Posterior cingulate gyrus (tissue), 11 donors: ENCODE measurements at regions of chr11 and their contacts with region 1.

Region 1: DNA sequence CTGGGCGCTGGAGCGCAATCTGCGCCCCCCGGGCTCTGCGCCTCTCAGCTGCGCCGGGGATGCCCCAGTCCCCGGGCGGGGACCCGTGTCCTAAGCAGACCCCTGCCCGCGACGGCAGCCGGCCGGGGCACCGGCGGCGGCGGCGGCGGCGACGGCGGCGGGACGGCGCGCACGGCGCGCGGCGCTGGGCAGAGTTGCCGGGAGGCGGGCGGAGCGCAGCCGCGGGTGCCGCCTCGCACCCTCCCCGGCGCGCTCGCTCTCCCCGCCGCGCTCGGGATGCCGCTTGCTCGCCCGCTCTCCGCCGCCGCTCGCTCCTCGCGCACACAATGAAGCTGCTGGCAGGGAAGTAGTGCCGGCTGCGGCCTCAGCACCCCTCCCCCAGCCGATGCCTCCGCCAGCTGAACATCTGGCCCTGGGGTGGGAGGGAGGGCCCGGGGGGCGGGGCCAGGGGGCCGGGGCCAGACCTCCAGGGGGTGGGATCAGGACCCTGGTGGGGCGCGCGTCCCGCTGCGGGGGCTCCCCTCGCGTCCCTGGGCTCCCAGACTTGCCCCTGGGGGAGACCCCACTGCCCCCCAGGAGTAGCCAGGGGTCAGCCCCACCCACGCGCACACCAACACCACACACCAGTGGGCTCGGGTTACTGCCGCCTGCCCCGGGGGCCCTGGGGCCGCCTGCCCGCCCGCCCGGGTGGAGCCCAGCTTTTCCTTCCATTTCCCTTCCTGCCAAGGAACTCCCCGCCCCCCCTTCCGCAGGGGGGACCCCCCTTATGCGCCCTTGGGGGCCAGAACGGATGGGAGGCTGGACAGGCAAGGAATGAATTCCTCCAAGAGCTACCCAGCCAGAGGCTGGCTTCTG is at the start of gene RCOR2:
- DNase-seq: peak; percentile 79 to 98 (median 85)

Region 2: DNA sequence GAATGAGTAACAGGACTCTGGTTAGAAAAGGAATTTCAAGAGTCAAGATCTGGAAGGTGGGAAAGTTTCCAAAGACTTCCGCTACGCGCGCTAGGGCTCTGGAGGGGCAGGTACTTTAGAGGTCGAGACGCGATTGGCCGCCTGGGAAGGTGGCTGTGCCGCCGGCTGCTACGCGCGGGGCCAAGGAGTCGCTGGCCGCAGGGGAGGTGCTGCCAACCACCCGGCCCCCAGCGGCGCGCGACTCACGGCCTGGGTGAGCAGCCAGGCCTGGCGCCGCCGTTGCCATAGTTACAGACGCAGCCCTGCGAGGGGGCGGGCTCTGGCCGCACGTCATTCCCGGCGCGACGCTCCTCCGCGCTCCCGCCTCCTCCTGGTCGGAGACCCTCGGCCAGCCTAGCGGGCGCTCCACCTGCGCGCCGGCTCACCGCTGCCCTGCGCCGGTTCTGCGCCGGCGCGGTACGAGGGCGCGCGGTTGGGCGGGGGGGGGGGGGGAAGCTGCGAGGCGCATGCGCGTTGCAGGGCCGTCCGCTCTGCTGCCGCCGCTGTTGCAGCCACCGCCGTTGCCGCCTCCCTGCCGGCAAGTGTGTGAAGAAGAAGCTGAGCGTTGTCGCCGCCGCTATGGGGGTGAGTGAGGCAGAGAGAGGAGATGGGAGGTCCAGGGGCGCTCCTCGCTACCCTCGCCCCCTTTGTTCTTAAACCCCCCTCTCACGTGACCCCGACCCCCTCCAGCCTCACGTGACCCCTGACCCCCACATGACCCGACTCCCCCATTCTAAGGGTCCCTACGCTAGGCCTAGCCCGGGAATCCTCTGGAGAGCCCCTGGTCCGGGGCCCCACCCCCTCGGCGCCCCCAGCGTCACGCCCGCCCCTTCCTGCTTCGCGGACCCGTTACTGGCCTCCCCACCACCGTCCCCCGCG is 21.7 kb after region 1 on chr11 and contains the start of gene NAA40:
- intact Hi-C with region 1: loop called (anchors 1 kb)
- DNase-seq: peak; percentile 70 to 98 (median 86)